ENCODE measurements at regions of chr16 and their contacts with region 1.

Region 1: GRCh38 chr16:16127469-16128116 is 95.7 kb downstream of the ABCC6 start:
- DNase-seq: peak; percentile 77
- H3K4me3 ChIP-seq: no peak overlapping the region
- H3K27ac ChIP-seq: no peak overlapping the region
- H3K4me1 ChIP-seq: no peaks in the 10 kb centered on the region
- H3K27me3 ChIP-seq: no peaks in the 10 kb centered on the region
- CTCF ChIP-seq: peak; percentile 69 to 79
- POLR2A ChIP-seq: no peak

Region 2: DNA sequence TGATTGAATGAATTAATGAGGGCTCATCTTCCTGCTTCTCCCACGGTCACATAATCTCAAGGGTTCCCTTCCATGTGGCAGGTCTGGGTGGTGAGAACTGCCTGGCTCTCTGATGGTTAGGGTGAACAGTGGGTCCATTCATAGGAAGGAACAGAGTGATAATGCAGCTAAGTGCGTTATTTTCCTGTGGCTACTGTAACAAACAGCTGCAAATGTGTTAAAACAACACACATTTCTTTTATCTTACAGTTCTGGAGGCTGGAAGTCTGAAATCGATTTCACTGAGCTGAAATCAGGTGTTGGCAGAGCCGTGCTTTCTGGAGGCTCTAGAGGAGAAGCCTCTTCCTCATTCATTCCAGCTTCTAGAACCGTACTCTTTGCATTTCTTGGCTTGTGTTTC is 597.9 kb before region 1 on chr16:
- CTCF ChIA-PET with region 1: no interaction called
- POLR2A ChIA-PET with region 1: no interaction called
- dilution Hi-C with region 1: no loop called
- intact Hi-C with region 1: no loop called
- DNase-seq: no peak
- H3K4me3 ChIP-seq: no peak overlapping the region
- H3K27ac ChIP-seq: no peak overlapping the region
- H3K4me1 ChIP-seq: no peaks in the 10 kb centered on the region
- H3K27me3 ChIP-seq: no peaks in the 10 kb centered on the region
- CTCF ChIP-seq: no peak
- POLR2A ChIP-seq: no peak

Region 3: DNA sequence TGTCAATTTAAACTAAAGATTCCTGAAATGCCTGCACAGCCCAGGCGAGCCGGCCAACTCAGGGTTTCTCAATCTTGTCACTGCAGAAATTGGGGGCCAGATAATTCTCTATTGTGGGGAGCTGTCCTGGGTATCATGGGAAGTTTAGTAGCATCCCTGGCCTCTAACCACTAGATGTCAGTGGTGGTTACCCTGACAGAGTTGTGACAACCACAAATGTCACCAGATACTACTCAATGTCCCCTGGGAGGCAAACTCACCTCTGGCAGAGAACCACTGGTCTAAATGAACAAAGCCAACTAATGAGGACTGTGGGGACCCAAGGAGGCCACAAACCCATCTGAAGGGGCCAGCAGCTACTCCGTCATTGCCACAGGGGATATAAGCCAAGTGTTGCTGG is 361.7 kb before region 1 on chr16:
- CTCF ChIA-PET with region 1: interaction called, 13 read pairs
- POLR2A ChIA-PET with region 1: no interaction called
- dilution Hi-C with region 1: no loop called
- intact Hi-C with region 1: loop called (anchors 1 kb)
- DNase-seq: peak; percentile 44
- H3K4me3 ChIP-seq: no peak overlapping the region
- H3K27ac ChIP-seq: no peak overlapping the region
- H3K4me1 ChIP-seq: no peaks in the 10 kb centered on the region
- H3K27me3 ChIP-seq: peaks cover 2 to 6% of the 10 kb centered on the region in 2 experiments
- CTCF ChIP-seq: peak; percentile 61 to 72
- POLR2A ChIP-seq: no peak

Region 4: GRCh38 chr16:15777533-15778203 is 349.9 kb before region 1 on chr16:
- CTCF ChIA-PET with region 1: interaction called, 4 read pairs
- POLR2A ChIA-PET with region 1: no interaction called
- dilution Hi-C with region 1: no loop called
- intact Hi-C with region 1: loop called (anchors 1 kb)
- DNase-seq: peak; percentile 54
- H3K4me3 ChIP-seq: no peak overlapping the region
- H3K27ac ChIP-seq: no peak overlapping the region
- H3K4me1 ChIP-seq: no peaks in the 10 kb centered on the region
- H3K27me3 ChIP-seq: peaks cover 4 to 5% of the 10 kb centered on the region in 2 experiments
- CTCF ChIP-seq: peak; percentile 17 to 54
- POLR2A ChIP-seq: no peak

Region 5: DNA sequence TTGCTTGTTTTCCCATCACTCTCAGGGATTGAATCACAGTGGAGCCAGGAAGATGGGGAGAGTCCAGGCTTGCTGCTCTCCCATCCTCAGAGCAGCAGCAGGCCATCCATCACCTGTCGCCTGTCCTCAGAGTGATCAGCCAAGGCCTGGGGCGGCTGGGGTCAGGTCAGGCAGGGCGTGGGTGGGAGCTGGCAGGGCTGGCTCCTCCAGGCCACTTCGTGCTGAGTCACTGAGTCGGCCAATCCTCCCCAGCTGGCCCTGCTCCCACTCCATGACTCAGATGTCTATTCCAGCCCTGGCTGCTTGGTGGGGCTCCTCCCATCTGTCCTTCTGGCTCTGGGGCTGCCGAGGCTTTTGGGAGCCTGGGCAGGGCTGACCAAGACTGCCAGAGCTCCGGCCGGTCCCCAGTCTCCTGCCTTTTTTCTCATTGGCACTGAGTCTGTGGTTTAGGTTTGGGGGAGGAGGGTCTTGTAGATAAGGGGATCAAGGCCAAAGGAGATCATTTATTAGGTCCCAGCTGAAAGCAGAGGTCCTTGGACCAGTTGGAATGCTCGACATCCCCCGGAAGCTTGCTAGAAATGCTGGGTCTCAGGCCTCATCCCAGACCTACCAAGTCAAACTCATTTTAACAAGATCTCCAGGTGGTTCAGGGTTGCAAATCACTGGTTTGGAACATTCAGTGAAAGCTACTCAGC is 105.5 kb before region 1 on chr16:
- CTCF ChIA-PET with region 1: no interaction called
- POLR2A ChIA-PET with region 1: no interaction called
- dilution Hi-C with region 1: no loop called
- intact Hi-C with region 1: loop called (anchors 10 kb)
- DNase-seq: peak; percentile 96
- H3K4me3 ChIP-seq: no peak overlapping the region
- H3K27ac ChIP-seq: peak overlapping the region; percentile 91
- H3K4me1 ChIP-seq: peaks cover 35% of the 10 kb centered on the region
- H3K27me3 ChIP-seq: no peaks in the 10 kb centered on the region
- CTCF ChIP-seq: no peak
- POLR2A ChIP-seq: peak; percentile 33

Region 6: DNA sequence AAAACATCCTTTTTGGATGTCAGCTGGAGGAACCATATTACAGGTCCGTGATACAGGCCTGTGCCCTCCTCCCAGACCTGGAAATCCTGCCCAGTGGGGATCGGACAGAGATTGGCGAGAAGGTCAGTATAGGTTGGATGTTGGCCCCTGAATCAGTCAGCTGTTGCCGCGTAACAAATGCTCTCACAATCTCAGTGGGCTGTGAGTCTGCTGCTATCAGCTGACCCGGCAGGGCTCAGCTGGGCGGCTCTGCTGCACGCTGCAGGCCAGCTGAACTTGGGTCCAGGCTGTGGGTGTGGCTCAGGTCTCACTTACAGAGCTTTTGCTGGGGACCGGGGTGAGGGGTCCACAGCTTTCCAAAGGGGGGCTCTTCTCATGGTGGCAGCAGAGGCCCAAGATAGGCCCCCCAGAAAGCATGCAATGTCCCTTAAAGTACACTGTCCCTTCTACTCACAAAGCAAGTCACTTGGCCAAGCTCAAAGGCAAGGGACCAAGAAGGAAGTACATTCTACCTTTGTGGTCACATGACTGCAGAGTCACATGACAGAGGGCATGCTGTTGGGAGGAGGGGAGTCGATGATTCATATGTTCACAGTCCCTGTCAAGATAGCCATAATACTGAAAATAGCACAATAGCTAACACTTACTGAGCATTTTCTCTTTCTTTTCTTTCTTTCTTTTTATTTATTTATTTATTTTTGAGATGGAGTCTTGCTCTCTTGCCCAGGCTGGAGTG is 44.0 kb before region 1 on chr16:
- CTCF ChIA-PET with region 1: no interaction called
- POLR2A ChIA-PET with region 1: no interaction called
- dilution Hi-C with region 1: no loop called
- intact Hi-C with region 1: loop called (anchors 1 kb)
- DNase-seq: no peak
- H3K4me3 ChIP-seq: no peak overlapping the region
- H3K27ac ChIP-seq: no peak overlapping the region
- H3K4me1 ChIP-seq: no peaks in the 10 kb centered on the region
- H3K27me3 ChIP-seq: no peaks in the 10 kb centered on the region
- CTCF ChIP-seq: no peak
- POLR2A ChIP-seq: no peak